IMR-90 (cell line): ENCODE measurements at regions of chr20 and their contacts with region 1.

Region 1: GRCh38 chr20:884983-885952 is 30.9 kb downstream of the ANGPT4 start:
- DNase-seq: peak; percentile 26
- ATAC-seq: peak; percentile 95
- H3K4me3 ChIP-seq: no peak overlapping the region
- H3K27ac ChIP-seq: no peak overlapping the region
- H3K4me1 ChIP-seq: no peaks in the 10 kb centered on the region
- H3K27me3 ChIP-seq: no peaks in the 10 kb centered on the region; the same call in none of the 2 replicates
- CTCF ChIP-seq: no peak
- POLR2A ChIP-seq: no peak
- RAD21 ChIP-seq: no peak

Region 2: DNA sequence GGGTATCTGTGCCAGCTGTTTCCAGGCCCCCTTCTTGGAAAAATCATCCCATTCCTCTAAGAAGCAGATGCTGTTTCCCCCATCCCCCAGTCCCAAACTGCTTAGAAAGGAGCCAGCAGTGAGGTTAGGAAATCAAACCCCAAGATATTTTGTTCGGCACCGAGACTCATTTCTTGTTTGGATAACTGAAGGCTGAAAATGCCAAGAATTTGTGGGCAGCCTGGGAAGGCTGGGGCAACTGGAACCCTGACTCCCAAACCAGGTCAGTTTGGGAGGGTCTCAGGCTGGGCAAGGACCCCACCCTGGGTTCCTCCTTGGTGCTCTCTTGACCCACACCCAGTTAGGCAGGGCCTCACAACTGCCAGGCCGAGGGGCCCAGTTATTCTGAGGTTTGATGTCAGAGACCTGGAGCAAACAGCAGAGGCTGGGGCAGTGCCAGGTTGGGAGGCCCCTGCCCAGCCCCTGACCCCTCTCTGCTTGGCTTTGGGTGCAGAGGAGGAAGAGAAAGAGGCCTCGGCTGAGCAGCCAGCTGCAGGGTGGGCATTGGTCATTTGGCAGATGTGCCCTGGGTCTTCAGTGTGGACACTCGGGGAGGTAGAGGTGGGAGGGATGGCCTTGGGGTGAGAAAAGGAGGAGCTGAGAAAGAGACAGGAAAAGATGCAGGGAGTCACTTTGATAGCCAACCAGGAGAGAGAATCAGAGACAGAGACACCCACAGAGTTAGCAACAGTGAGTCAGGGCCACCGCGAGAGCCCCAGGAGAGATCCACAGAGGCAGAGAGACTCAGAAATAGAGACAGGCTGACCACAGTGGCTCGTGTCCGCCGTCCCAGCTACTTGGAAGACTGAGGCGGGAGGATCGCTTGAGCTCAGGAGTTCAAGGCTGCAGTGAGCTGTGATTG is 25.9 kb after region 1 on chr20:
- CTCF ChIA-PET with region 1: no interaction called
- POLR2A ChIA-PET with region 1: no interaction called
- dilution Hi-C with region 1: no loop called
- in situ Hi-C with region 1: no loop called
- intact Hi-C with region 1: loop called (anchors 1 kb)
- DNase-seq: peak; percentile 10
- ATAC-seq: peak; percentile 77
- H3K4me3 ChIP-seq: no peak overlapping the region
- H3K27ac ChIP-seq: peak overlapping the region; percentile 90
- H3K4me1 ChIP-seq: peaks cover 13% of the 10 kb centered on the region; the same call in 1 of the 2 replicates
- H3K27me3 ChIP-seq: no peaks in the 10 kb centered on the region; the same call in 1 of the 2 replicates
- CTCF ChIP-seq: no peak
- POLR2A ChIP-seq: no peak
- RAD21 ChIP-seq: no peak

Region 3: GRCh38 chr20:956330-956951 is 71.2 kb after region 1 on chr20:
- CTCF ChIA-PET with region 1: no interaction called
- POLR2A ChIA-PET with region 1: no interaction called
- dilution Hi-C with region 1: no loop called
- in situ Hi-C with region 1: no loop called
- intact Hi-C with region 1: loop called (anchors 1 kb)
- DNase-seq: peak; percentile 51
- ATAC-seq: peak; percentile 94
- H3K4me3 ChIP-seq: no peak overlapping the region
- H3K27ac ChIP-seq: no peak overlapping the region
- H3K4me1 ChIP-seq: no peaks in the 10 kb centered on the region
- H3K27me3 ChIP-seq: peaks cover 8% of the 10 kb centered on the region
- CTCF ChIP-seq: peak; percentile 97
- POLR2A ChIP-seq: peak; percentile 57
- RAD21 ChIP-seq: peak; percentile 99